Activated naive CD8-positive, alpha-beta T cell treated with anti-CD3 and anti-CD28 coated beads, Interleukin-2, amount 10 ng/mL, durations not matched to agents 7 days and 5 days (primary cell): ENCODE measurements at regions of chr11 and their contacts with region 1.

Region 1: GRCh38 chr11:102451681-102452460 is 694 bp downstream of the TMEM123 start:
- DNase-seq: peak; percentile 83
- ATAC-seq: peak; percentile 61
- H3K4me3 Mint-ChIP-seq: peak overlapping the region; percentile 98
- H3K27ac Mint-ChIP-seq: peak overlapping the region; percentile 90
- H3K4me1 Mint-ChIP-seq: peaks cover 61% of the 10 kb centered on the region
- H3K27me3 Mint-ChIP-seq: no peaks in the 10 kb centered on the region

Region 2: GRCh38 chr11:102399189-102399588 is 52.7 kb before region 1 on chr11:
- POLR2A ChIA-PET with region 1: no interaction called
- DNase-seq: no peak
- ATAC-seq: no peak
- H3K4me3 Mint-ChIP-seq: no peak overlapping the region
- H3K27ac Mint-ChIP-seq: no peak overlapping the region
- H3K4me1 Mint-ChIP-seq: peaks cover 34% of the 10 kb centered on the region
- H3K27me3 Mint-ChIP-seq: no peaks in the 10 kb centered on the region

Region 3: GRCh38 chr11:102476812-102477211 is 24.9 kb after region 1 on chr11:
- POLR2A ChIA-PET with region 1: interaction called, 12 read pairs
- DNase-seq: no peak
- ATAC-seq: peak; percentile 98
- H3K4me3 Mint-ChIP-seq: peak overlapping the region; percentile 65
- H3K27ac Mint-ChIP-seq: peak overlapping the region; percentile 93
- H3K4me1 Mint-ChIP-seq: peaks cover 52% of the 10 kb centered on the region
- H3K27me3 Mint-ChIP-seq: no peaks in the 10 kb centered on the region